ENCODE measurements at regions of chr2 and their contacts with region 1.

Region 1: GRCh38 chr2:105797298-105797819 is 52.6 kb downstream of the NCK2 start:
- DNase-seq: peak; percentile 48
- H3K4me3 Mint-ChIP-seq: peak overlapping the region; percentile 53
- H3K27ac Mint-ChIP-seq: peak overlapping the region; percentile 91
- H3K4me1 Mint-ChIP-seq: peaks cover 87% of the 10 kb centered on the region
- H3K27me3 Mint-ChIP-seq: no peaks in the 10 kb centered on the region

Region 2: GRCh38 chr2:105641389-105641811 is 156.0 kb before region 1 on chr2:
- intact Hi-C with region 1: no loop called
- DNase-seq: no peak
- H3K4me3 Mint-ChIP-seq: no peak overlapping the region
- H3K27ac Mint-ChIP-seq: no peak overlapping the region
- H3K4me1 Mint-ChIP-seq: no peaks in the 10 kb centered on the region
- H3K27me3 Mint-ChIP-seq: peaks cover 14% of the 10 kb centered on the region

Region 3: DNA sequence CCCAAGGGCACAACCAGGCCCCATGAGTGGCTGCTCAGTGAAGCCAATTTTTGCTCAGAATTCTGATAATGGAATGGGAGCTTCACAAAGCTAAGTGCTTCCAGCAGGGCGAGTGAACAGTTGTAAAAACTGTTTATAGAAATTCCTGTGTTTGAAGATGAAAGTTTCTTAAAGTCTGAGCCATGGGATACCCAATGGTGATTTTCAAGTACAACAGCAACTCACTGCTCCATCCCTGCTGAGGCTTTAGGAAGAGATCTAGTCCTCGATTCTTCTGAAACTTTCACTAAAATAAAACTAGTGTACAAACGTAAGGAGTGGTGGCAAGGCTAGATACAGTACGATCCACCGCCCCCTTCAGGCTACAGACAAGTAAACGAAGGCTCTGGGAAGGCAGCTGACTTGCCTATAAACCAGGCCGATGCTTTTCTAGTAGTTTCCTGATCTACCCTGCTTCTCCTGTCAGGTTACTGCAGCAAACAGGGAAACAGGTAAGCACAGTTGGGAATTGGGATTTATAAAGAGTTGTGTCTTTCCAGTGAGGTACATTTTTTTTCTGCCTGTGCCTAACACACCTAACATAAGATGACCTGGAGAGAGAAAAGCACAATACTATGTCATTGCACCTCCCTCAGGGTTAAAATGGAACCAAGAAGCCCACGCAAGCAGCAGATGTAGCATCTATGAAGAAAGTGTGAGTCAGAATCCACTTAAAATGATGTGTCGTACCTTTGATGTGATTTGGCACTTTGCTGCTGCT is 288.0 kb after region 1 on chr2:
- intact Hi-C with region 1: loop called (anchors 5 kb)
- DNase-seq: peak; percentile 44
- H3K4me3 Mint-ChIP-seq: peak overlapping the region; percentile 7
- H3K27ac Mint-ChIP-seq: peak overlapping the region; percentile 72
- H3K4me1 Mint-ChIP-seq: peaks cover 40% of the 10 kb centered on the region
- H3K27me3 Mint-ChIP-seq: peaks cover 6% of the 10 kb centered on the region